ENCODE measurements at regions of chr12 and their contacts with region 1.

Region 1: DNA sequence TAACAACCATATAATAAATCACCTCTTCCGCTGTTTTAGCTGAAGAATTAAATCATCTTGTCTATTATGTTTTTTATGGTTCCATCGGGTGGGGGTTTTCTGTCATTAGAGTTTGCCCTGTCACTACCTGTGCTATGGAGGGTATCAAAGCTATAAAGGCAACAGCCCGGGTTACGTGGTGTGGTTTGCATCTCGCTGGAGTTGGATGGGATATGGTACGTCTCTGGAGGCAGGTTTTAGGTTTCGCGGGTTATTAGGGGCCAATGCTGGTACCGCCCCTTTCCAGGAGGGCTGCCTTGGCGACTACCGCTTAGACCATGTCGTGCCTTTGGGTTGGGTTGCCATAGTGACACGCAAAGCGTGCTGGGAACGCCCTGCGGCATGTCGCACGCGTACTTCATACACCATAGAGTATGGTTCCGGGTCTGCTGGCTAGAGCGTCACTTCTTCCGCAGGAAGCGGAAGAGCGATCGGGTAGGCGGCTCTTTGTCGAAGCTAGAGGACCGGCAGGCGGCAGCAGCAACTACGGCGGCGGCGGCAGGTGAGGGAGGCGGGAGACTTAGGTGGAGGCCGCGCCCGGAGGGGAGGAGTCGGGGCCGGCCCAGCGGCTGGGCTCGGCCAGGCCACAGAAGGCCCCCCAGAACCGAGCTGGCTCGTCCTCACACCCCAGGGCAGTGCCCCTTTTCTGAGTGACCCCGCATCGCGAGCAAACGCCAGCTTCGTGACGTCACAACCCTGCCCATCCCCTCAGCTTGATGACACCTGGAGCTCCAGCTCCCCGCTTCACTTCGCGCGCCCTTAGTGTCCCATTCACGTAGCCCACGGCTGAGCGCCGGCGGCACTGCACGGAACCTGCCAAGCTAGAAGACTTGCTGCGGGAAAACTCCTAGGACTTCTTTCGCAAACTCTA is at the start of gene ZC3H10:
- DNase-seq: peak; percentile 96 to 99 (median 98)
- H3K4me3 ChIP-seq: peak within 1 kb of the TSS; percentile 99
- H3K4me3 Mint-ChIP-seq: peak within 1 kb of the TSS; percentile 95 to 99 (median 98)
- H3K27ac ChIP-seq: peak within 1 kb of the TSS; percentile 89
- H3K27ac Mint-ChIP-seq: peak within 1 kb of the TSS; percentile 94 to 100 (median 99)
- H3K4me1 ChIP-seq: peaks cover 34% of the 10 kb centered on the region
- H3K4me1 Mint-ChIP-seq: peaks cover 22 to 44% (median 31%) of the 10 kb centered on the region in 4 donors
- H3K27me3 ChIP-seq: no peaks in the 10 kb centered on the region
- H3K27me3 Mint-ChIP-seq: no peaks in the 10 kb centered on the region
- total RNA-seq, gene ZC3H10: 16.3 to 19.6 TPM

Region 2: DNA sequence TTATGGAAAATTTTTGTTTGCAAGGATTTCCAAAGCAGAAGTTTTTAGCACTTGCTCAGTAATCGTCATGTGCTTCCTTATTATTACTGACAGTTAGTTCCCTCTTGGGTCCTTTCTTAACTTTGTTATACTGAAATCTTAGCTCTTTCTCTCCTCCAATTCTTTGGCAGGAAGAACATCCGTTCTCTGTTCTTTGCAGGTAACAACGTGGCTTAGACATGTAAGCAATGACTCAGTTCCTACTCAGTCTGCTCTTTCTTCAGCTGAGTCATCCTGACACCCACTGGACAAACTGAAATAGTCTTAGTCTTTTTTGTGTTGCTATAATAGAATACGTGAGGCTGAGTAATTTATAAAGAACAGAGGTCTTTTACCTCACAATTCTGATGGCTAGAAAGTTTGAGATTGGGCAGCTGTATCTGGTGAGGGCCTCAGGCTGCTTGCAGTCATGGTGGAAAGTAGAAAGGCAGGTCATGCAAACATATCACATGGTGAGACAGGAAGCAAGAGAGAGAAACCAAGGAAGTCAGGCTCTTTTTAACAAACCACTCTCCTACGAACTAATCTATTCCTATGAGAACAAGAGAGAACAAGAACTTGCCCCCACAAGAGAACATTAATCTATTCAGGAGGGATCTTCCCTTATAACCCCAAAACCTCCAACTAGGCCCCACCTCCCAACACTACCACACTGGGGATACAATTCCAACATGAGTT is 1182.6 kb before region 1 on chr12:
- CTCF ChIA-PET with region 1: no interaction called
- POLR2A ChIA-PET with region 1: no interaction called
- intact Hi-C with region 1: no loop called
- DNase-seq: peak; percentile 53 to 71 (median 60)
- H3K4me3 ChIP-seq: no peak overlapping the region
- H3K4me3 Mint-ChIP-seq: peak overlapping the region in 7 of 8 donors; percentile 42 to 85 (median 74)
- H3K27ac ChIP-seq: peak overlapping the region; percentile 35
- H3K27ac Mint-ChIP-seq: peak overlapping the region; percentile 80 to 96 (median 91)
- H3K4me1 ChIP-seq: peaks cover 45% of the 10 kb centered on the region
- H3K4me1 Mint-ChIP-seq: peaks cover 33 to 53% (median 44%) of the 10 kb centered on the region in 4 donors
- H3K27me3 ChIP-seq: no peaks in the 10 kb centered on the region
- H3K27me3 Mint-ChIP-seq: no peaks in the 10 kb centered on the region

Region 3: GRCh38 chr12:55973598-55974307 is 144.3 kb before region 1 on chr12 and contains the start of gene RAB5B:
- CTCF ChIA-PET with region 1: no interaction called
- POLR2A ChIA-PET with region 1: interaction called, 18 read pairs
- intact Hi-C with region 1: loop called (anchors 1 kb)
- DNase-seq: peak; percentile 95 to 100 (median 99)
- H3K4me3 ChIP-seq: peak within 1 kb of the TSS; percentile 60 to 73
- H3K4me3 Mint-ChIP-seq: no peak within 1 kb of the TSS
- H3K27ac ChIP-seq: peak within 1 kb of the TSS; percentile 87
- H3K27ac Mint-ChIP-seq: no peak within 1 kb of the TSS
- H3K4me1 ChIP-seq: peaks cover 37% of the 10 kb centered on the region
- H3K4me1 Mint-ChIP-seq: peaks cover 14 to 30% (median 23%) of the 10 kb centered on the region in 4 donors
- H3K27me3 ChIP-seq: no peaks in the 10 kb centered on the region
- H3K27me3 Mint-ChIP-seq: no peaks in the 10 kb centered on the region
- total RNA-seq, gene RAB5B: 106 to 112 TPM

Region 4: DNA sequence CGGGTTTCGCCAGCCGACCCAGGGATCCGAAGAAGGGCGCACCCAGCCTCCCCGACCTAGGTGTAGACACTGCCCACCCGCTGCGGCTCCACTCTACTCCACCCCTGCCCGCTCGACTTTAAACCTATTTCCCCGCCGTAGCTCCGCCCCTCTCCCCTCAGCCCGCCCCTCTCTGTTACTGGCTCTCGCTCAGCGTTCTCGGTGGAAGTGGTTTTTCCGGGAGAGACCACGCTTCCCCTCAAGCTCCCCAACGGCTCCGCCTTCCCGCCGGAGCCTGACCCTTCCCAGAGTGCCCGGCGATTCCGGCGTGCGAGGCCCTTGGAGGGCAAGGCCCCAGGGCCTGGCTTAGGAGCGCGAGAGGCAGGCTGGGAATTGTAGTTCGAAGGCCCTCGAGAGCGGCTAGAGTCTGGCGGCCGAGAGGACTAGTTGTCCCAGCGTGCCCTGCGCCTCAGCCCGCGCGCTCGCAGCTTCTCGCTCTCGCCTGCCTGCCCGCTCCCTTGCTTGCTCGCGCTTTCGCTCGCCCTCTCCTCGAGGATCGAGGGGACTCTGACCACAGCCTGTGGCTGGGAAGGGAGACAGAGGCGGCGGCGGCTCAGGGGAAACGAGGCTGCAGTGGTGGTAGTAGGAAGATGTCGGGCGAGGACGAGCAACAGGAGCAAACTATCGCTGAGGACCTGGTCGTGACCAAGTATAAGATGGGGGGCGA is 13.8 kb before region 1 on chr12 and contains the start of gene PA2G4:
- CTCF ChIA-PET with region 1: interaction called, 68 read pairs
- POLR2A ChIA-PET with region 1: interaction called, 324 read pairs
- intact Hi-C with region 1: loop called (anchors 1 kb)
- DNase-seq: peak; percentile 95 to 97 (median 96)
- H3K4me3 ChIP-seq: peak within 1 kb of the TSS; percentile 62 to 90
- H3K4me3 Mint-ChIP-seq: peak within 1 kb of the TSS; percentile 89 to 99 (median 96)
- H3K27ac ChIP-seq: peak within 1 kb of the TSS; percentile 82
- H3K27ac Mint-ChIP-seq: peak within 1 kb of the TSS; percentile 97 to 100 (median 98)
- H3K4me1 ChIP-seq: peaks cover 49% of the 10 kb centered on the region
- H3K4me1 Mint-ChIP-seq: peaks cover 34 to 62% (median 47%) of the 10 kb centered on the region in 4 donors
- H3K27me3 ChIP-seq: no peaks in the 10 kb centered on the region
- H3K27me3 Mint-ChIP-seq: no peaks in the 10 kb centered on the region
- total RNA-seq, gene PA2G4: 106 to 108 TPM

Region 5: GRCh38 chr12:56152318-56153033 is 34.4 kb after region 1 on chr12 and contains the start of gene MYL6B:
- CTCF ChIA-PET with region 1: interaction called, 24 read pairs
- POLR2A ChIA-PET with region 1: interaction called, 19 read pairs
- intact Hi-C with region 1: loop called (anchors 1 kb)
- DNase-seq: peak; percentile 87 to 94 (median 88)
- H3K4me3 ChIP-seq: peak within 1 kb of the TSS; percentile 66 to 91
- H3K4me3 Mint-ChIP-seq: peak within 1 kb of the TSS; percentile 91 to 96 (median 94)
- H3K27ac ChIP-seq: peak within 1 kb of the TSS; percentile 84
- H3K27ac Mint-ChIP-seq: peak within 1 kb of the TSS; percentile 93 to 99 (median 97)
- H3K4me1 ChIP-seq: peaks cover 35% of the 10 kb centered on the region
- H3K4me1 Mint-ChIP-seq: peaks cover 16 to 49% (median 28%) of the 10 kb centered on the region in 4 donors
- H3K27me3 ChIP-seq: no peaks in the 10 kb centered on the region
- H3K27me3 Mint-ChIP-seq: no peaks in the 10 kb centered on the region
- total RNA-seq, gene MYL6B: 2.6 to 3.4 TPM

Region 6: GRCh38 chr12:56258057-56258819 is 140.2 kb after region 1 on chr12 and contains the start of gene ANKRD52:
- CTCF ChIA-PET with region 1: interaction called, 10 read pairs
- POLR2A ChIA-PET with region 1: interaction called, 23 read pairs
- intact Hi-C with region 1: loop called (anchors 1 kb)
- DNase-seq: peak; percentile 76 to 87 (median 82)
- H3K4me3 ChIP-seq: peak within 1 kb of the TSS; percentile 85 to 95
- H3K4me3 Mint-ChIP-seq: peak within 1 kb of the TSS; percentile 89 to 97 (median 92)
- H3K27ac ChIP-seq: peak within 1 kb of the TSS; percentile 81
- H3K27ac Mint-ChIP-seq: peak within 1 kb of the TSS; percentile 82 to 95 (median 91)
- H3K4me1 ChIP-seq: peaks cover 21% of the 10 kb centered on the region
- H3K4me1 Mint-ChIP-seq: peaks cover 13 to 31% (median 19%) of the 10 kb centered on the region in 4 donors
- H3K27me3 ChIP-seq: no peaks in the 10 kb centered on the region
- H3K27me3 Mint-ChIP-seq: no peaks in the 10 kb centered on the region
- total RNA-seq, gene ANKRD52: 44.1 to 44.5 TPM

Region 7: GRCh38 chr12:56359851-56360767 is 242.1 kb after region 1 on chr12 and contains the start of gene STAT2:
- CTCF ChIA-PET with region 1: interaction called, 10 read pairs
- POLR2A ChIA-PET with region 1: interaction called, 7 read pairs
- intact Hi-C with region 1: no loop called
- DNase-seq: peak; percentile 99 to 100 (median 100)
- H3K4me3 ChIP-seq: peak within 1 kb of the TSS; percentile 78 to 97
- H3K4me3 Mint-ChIP-seq: peak within 1 kb of the TSS; percentile 92 to 98 (median 96)
- H3K27ac ChIP-seq: peak within 1 kb of the TSS; percentile 84
- H3K27ac Mint-ChIP-seq: peak within 1 kb of the TSS; percentile 89 to 98 (median 96)
- H3K4me1 ChIP-seq: peaks cover 29% of the 10 kb centered on the region
- H3K4me1 Mint-ChIP-seq: peaks cover 16 to 30% (median 21%) of the 10 kb centered on the region in 4 donors
- H3K27me3 ChIP-seq: no peaks in the 10 kb centered on the region
- H3K27me3 Mint-ChIP-seq: no peaks in the 10 kb centered on the region
- total RNA-seq, gene STAT2: 192 to 193 TPM

Measured in CD4-positive, alpha-beta memory T cell (primary cell).